ENCODE measurements at regions of chr4 and their contacts with region 1.

Region 1: GRCh38 chr4:122854447-122855352 is 28.1 kb downstream of the FGF2 start:
- DNase-seq: no peak
- H3K4me3 ChIP-seq: no peak overlapping the region
- H3K27ac ChIP-seq: no peak overlapping the region
- H3K4me1 ChIP-seq: peaks cover 6 to 46% (median 24%) of the 10 kb centered on the region in 4 experiments
- H3K27me3 ChIP-seq: no peaks in the 10 kb centered on the region
- CTCF ChIP-seq: no peak
- EP300 ChIP-seq: no peak
- POLR2A ChIP-seq: no peak
- RAD21 ChIP-seq: no peak

Region 2: DNA sequence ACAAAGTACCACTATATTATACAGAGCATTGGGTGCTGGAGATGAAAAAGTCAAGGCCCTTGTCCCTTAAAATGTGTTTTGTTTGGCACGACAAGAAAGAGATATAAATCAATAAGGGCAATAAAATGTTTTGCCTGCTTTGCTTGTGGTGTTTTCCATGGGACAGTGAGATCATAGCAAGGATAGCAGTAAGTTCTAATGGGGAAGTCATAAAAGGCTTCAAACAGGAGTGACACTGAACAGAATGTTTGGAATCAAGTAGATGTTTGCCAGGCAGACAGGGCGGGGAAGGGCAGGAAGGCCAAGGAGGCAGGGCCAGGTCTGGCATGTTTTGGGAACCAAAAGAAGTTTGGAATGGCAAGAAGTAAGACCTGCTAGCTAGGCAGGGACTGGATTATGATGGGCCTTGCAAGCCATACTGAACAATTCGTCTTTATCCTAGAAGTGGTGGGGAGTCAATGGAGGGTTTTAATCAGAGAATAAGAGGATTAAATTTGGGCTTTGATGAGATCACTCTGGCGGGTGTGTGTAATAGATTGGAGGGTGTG is 11.6 kb before region 1 on chr4:
- CTCF ChIA-PET with region 1: interaction called, 12 read pairs
- POLR2A ChIA-PET with region 1: interaction called, 278 read pairs
- DNase-seq: peak in 1 of 2 experiments; percentile 44
- H3K4me3 ChIP-seq: no peak overlapping the region
- H3K27ac ChIP-seq: no peak overlapping the region
- H3K4me1 ChIP-seq: peaks cover 0 to 33% (median 15%) of the 10 kb centered on the region in 4 experiments; a peak in 6 of 7 replicates
- H3K27me3 ChIP-seq: no peaks in the 10 kb centered on the region
- CTCF ChIP-seq: no peak
- EP300 ChIP-seq: no peak
- POLR2A ChIP-seq: peak in 1 of 2 experiments; percentile 34; a peak in 2 of 3 replicates
- RAD21 ChIP-seq: no peak

Region 3: DNA sequence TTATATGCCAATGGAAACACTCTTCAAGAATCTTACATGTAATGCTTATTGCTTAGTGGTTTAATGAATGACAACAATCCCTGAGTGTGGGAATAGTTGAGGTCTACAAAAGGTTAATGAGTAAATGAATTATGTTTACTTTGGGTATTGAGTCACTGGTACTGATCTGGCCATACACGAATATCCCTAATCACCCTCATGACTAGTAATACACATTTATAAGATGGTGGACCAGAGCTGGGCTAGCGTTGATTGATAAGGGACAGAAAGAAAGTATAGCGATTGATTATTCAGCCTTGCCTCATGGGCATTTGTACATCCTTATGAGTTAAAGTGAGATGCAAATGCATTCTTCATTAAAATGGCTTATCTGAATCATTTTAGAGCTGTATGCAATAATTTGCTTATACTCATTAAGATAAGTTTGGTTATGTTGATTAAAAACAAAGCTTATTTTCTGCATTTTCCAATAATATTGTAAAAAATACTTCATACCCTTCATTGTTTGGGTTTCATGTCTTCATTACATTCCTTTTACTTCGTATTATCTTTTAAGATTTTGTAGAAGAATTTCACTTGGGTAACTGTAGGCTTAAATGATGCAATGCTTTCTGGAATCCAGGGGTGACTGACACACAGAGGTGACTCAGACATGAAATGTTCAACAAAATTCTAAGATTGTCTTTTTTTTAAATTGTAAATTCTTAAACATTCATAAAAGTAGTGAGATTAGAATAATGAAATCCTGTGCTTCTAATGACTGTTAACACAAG is 19.3 kb after region 1 on chr4:
- CTCF ChIA-PET with region 1: interaction called, 12 read pairs
- POLR2A ChIA-PET with region 1: interaction called, 4 read pairs
- DNase-seq: no peak
- H3K4me3 ChIP-seq: no peak overlapping the region
- H3K27ac ChIP-seq: no peak overlapping the region
- H3K4me1 ChIP-seq: peaks cover 0 to 3% (median 0%) of the 10 kb centered on the region in 4 experiments; a peak in 2 of 7 replicates
- H3K27me3 ChIP-seq: no peaks in the 10 kb centered on the region
- CTCF ChIP-seq: no peak
- EP300 ChIP-seq: no peak
- POLR2A ChIP-seq: no peak
- RAD21 ChIP-seq: no peak

Region 4: DNA sequence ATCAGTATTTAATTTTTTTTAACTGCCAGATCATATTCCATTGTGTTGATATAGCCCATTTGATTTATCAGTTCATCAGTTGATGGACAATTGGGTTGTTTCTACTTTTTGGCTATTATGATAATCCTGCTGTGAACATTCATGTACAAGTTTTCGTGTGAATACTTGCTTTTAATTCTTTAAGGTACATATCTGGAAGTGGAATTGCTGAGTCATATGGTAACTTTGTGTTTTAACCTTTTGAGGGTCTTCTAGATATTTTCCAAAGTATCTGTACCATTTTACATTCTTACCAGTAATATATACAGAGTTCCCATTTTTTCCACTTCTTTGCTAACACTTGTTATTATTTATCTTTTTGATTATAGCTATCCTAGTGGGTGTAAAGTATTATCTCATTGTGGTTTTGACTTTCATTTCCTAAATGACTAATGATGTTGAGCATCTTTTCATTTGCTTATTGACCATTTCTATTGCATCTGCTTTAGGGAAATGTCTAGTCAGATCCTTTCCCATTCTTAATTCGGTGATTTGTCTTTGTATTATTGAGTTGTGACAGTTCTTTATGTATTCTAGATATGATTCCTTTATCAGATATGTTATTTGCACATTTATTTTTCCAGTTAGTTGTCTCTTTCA is 142.9 kb after region 1 on chr4:
- CTCF ChIA-PET with region 1: no interaction called
- POLR2A ChIA-PET with region 1: no interaction called
- DNase-seq: no peak
- H3K4me3 ChIP-seq: no peak overlapping the region
- H3K27ac ChIP-seq: no peak overlapping the region
- H3K4me1 ChIP-seq: no peaks in the 10 kb centered on the region
- H3K27me3 ChIP-seq: no peaks in the 10 kb centered on the region
- CTCF ChIP-seq: no peak
- EP300 ChIP-seq: no peak
- POLR2A ChIP-seq: no peak
- RAD21 ChIP-seq: no peak

Measured in H1 (cell line).